CD8-positive, alpha-beta T cell (primary cell): ENCODE measurements at regions of chr1 and their contacts with region 1.

Region 1: DNA sequence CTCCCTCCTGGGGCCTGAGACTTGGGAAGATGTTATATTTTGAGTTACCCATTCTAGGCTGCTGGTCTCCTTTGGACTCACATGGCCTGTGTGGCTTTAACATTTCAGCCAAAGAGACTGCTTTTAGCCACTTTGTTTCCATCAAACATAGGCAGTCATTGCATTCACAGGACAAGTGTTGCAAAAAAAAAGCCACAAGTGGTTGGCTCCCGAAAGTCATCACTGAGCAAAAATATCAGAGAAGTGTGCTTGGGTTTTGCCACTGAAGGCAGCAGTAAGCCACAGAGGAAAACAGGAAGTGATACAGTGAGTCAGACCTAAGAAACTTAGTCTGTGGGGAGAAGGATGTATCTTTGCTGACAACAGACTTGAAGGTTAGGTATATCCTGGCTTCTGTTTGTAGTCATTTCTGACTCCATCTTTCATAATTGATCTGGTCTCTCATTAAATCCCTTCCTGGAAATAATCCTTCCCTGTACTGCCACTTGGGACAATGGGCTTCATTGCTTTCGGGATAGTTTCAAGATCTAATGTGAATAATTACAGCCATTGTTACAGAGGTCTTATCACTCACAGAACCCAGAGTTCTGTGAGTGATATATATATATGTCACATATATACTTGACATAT is 80.9 kb downstream of the COLGALT2 start:
- DNase-seq: peak in 8 of 9 experiments; percentile 34 to 90 (median 60)
- ATAC-seq: peak; percentile 97
- H3K4me3 ChIP-seq: no peak overlapping the region
- H3K4me3 Mint-ChIP-seq: peak overlapping the region; percentile 22
- H3K27ac ChIP-seq: peak overlapping the region; percentile 32 to 75
- H3K27ac Mint-ChIP-seq: no peak overlapping the region
- H3K4me1 ChIP-seq: peaks cover 27% of the 10 kb centered on the region
- H3K4me1 Mint-ChIP-seq: peaks cover 5% of the 10 kb centered on the region
- H3K27me3 ChIP-seq: no peaks in the 10 kb centered on the region
- H3K27me3 Mint-ChIP-seq: no peaks in the 10 kb centered on the region
- CTCF ChIP-seq: no peak

Region 2: GRCh38 chr1:182614796-182615454 is 1341.7 kb before region 1 on chr1:
- CTCF ChIA-PET with region 1: no interaction called
- POLR2A ChIA-PET with region 1: no interaction called
- intact Hi-C with region 1: loop called in 1 of 2 experiments (anchors 10 kb)
- DNase-seq: peak in 6 of 9 experiments; percentile 12 to 70 (median 42)
- ATAC-seq: peak; percentile 3
- H3K4me3 ChIP-seq: peak overlapping the region; percentile 38 to 46
- H3K4me3 Mint-ChIP-seq: peak overlapping the region; percentile 73
- H3K27ac ChIP-seq: no peak overlapping the region
- H3K27ac Mint-ChIP-seq: peak overlapping the region; percentile 91
- H3K4me1 ChIP-seq: peaks cover 32% of the 10 kb centered on the region
- H3K4me1 Mint-ChIP-seq: peaks cover 30% of the 10 kb centered on the region
- H3K27me3 ChIP-seq: peaks cover 19 to 25% of the 10 kb centered on the region in 2 experiments
- H3K27me3 Mint-ChIP-seq: peaks cover 66% of the 10 kb centered on the region
- CTCF ChIP-seq: no peak

Region 3: DNA sequence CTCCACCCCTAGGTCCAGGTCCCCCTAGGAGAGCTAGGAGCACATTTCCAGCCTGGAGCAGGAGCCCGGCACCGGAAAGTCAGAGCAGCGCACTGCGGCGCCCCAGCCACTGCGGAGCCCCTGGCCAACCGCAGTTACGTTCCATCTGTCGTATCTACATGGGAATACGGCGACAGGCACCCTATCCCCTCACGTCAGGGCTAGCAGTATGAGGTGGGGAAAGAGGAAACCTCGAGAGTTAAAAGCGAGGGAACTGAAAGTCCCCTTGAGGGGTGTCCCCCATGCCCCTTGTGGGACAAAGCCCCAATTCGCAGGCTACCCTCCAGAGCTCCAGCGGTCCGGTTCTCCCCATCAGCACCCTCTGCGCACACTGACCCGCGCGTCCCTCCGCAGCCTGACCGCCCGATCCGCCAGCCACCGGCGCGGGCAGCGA is 79.9 kb after region 1 on chr1:
- CTCF ChIA-PET with region 1: no interaction called
- POLR2A ChIA-PET with region 1: no interaction called
- intact Hi-C with region 1: loop called in 1 of 2 experiments (anchors 5 kb)
- DNase-seq: peak in 5 of 9 experiments; percentile 12 to 56 (median 44)
- ATAC-seq: peak; percentile 38
- H3K4me3 ChIP-seq: peak overlapping the region; percentile 45 to 57
- H3K4me3 Mint-ChIP-seq: peak overlapping the region; percentile 71
- H3K27ac ChIP-seq: no peak overlapping the region
- H3K27ac Mint-ChIP-seq: no peak overlapping the region
- H3K4me1 ChIP-seq: peaks cover 7% of the 10 kb centered on the region
- H3K4me1 Mint-ChIP-seq: peaks cover 15% of the 10 kb centered on the region
- H3K27me3 ChIP-seq: peaks cover 0 to 3% of the 10 kb centered on the region in 2 experiments
- H3K27me3 Mint-ChIP-seq: peaks cover 46% of the 10 kb centered on the region
- CTCF ChIP-seq: no peak

Region 4: DNA sequence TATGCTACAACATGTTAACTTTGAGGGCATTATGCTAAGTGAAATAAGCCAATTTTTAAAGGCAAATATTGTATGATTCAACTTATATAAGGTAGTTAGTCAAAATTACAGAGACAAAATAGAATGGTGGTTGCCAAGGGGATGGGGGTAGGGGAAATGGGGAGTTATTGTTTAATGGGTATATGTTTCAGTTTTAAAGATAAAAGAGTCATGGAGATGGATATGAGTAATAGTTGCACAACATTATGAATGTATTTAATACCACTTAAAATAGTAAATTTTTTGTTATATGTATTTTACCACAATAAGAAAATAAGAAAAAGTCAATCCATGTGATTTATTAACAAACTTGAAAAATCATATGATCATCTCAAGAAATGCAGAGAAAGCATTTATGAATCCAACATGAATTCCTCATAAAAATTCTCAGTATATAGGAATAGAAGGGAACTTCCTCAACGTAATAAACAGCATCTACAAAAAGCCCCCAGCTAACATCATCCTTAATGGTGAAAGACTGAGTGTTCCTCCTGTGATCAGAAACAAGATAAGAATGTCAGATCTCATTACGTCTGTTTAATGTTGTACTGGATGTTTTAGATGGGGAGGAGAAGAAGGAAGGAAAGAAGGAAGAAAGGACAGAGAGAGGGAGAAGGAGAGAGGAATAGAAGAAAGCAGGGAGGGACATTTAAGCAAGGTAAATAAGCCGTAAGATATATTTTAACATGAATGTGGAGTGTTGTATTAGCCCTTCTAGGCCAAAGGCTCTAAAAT is 88.1 kb after region 1 on chr1:
- CTCF ChIA-PET with region 1: no interaction called
- POLR2A ChIA-PET with region 1: no interaction called
- intact Hi-C with region 1: loop called (anchors 5 kb)
- DNase-seq: no peak
- ATAC-seq: no peak
- H3K4me3 ChIP-seq: no peak overlapping the region
- H3K4me3 Mint-ChIP-seq: no peak overlapping the region
- H3K27ac ChIP-seq: no peak overlapping the region
- H3K27ac Mint-ChIP-seq: no peak overlapping the region
- H3K4me1 ChIP-seq: no peaks in the 10 kb centered on the region
- H3K4me1 Mint-ChIP-seq: no peaks in the 10 kb centered on the region
- H3K27me3 ChIP-seq: no peaks in the 10 kb centered on the region
- H3K27me3 Mint-ChIP-seq: peaks cover 47% of the 10 kb centered on the region
- CTCF ChIP-seq: no peak

Region 5: GRCh38 chr1:184051485-184052193 is 95.0 kb after region 1 on chr1 and contains the start of gene TSEN15:
- CTCF ChIA-PET with region 1: no interaction called
- POLR2A ChIA-PET with region 1: interaction called, 19 read pairs
- intact Hi-C with region 1: loop called (anchors 1 to 5 kb)
- DNase-seq: peak; percentile 49 to 89 (median 76)
- ATAC-seq: peak; percentile 95
- H3K4me3 ChIP-seq: peak within 1 kb of the TSS; percentile 86 to 94
- H3K4me3 Mint-ChIP-seq: peak within 1 kb of the TSS; percentile 98
- H3K27ac ChIP-seq: peak within 1 kb of the TSS; percentile 66 to 78
- H3K27ac Mint-ChIP-seq: peak within 1 kb of the TSS; percentile 98
- H3K4me1 ChIP-seq: peaks cover 21% of the 10 kb centered on the region
- H3K4me1 Mint-ChIP-seq: peaks cover 47% of the 10 kb centered on the region
- H3K27me3 ChIP-seq: no peaks in the 10 kb centered on the region
- H3K27me3 Mint-ChIP-seq: peaks cover 14% of the 10 kb centered on the region
- CTCF ChIP-seq: no peak
- total RNA-seq, gene TSEN15: 14.8 to 15.9 TPM

Region 6: GRCh38 chr1:184222652-184223052 is 266.0 kb after region 1 on chr1:
- CTCF ChIA-PET with region 1: interaction called, 16 read pairs
- POLR2A ChIA-PET with region 1: interaction called, 3 read pairs
- intact Hi-C with region 1: loop called (anchors 1 to 2 kb)
- DNase-seq: peak in 7 of 9 experiments; percentile 16 to 57 (median 49)
- ATAC-seq: no peak
- H3K4me3 ChIP-seq: no peak overlapping the region
- H3K4me3 Mint-ChIP-seq: no peak overlapping the region
- H3K27ac ChIP-seq: no peak overlapping the region
- H3K27ac Mint-ChIP-seq: no peak overlapping the region
- H3K4me1 ChIP-seq: no peaks in the 10 kb centered on the region
- H3K4me1 Mint-ChIP-seq: no peaks in the 10 kb centered on the region
- H3K27me3 ChIP-seq: no peaks in the 10 kb centered on the region
- H3K27me3 Mint-ChIP-seq: peaks cover 6% of the 10 kb centered on the region
- CTCF ChIP-seq: peak; percentile 85